ENCODE measurements at regions of chr6 and their contacts with region 1.

Region 1: GRCh38 chr6:2988426-2989331 is 11.0 kb upstream of the NQO2 start:
- DNase-seq: no peak
- ATAC-seq: peak; percentile 92
- H3K4me3 ChIP-seq: peak overlapping the region; percentile 71
- H3K27ac ChIP-seq: peak overlapping the region; percentile 79
- H3K4me1 ChIP-seq: peaks cover 13% of the 10 kb centered on the region
- H3K27me3 ChIP-seq: peaks cover 0 to 2% of the 10 kb centered on the region in 2 experiments; a peak in 3 of 4 replicates
- CTCF ChIP-seq: peak; percentile 56 to 75 (median 73)
- EP300 ChIP-seq: no peak; a peak in 1 of 4 replicates
- POLR2A ChIP-seq: peak; percentile 64
- RAD21 ChIP-seq: peak; percentile 73

Region 2: DNA sequence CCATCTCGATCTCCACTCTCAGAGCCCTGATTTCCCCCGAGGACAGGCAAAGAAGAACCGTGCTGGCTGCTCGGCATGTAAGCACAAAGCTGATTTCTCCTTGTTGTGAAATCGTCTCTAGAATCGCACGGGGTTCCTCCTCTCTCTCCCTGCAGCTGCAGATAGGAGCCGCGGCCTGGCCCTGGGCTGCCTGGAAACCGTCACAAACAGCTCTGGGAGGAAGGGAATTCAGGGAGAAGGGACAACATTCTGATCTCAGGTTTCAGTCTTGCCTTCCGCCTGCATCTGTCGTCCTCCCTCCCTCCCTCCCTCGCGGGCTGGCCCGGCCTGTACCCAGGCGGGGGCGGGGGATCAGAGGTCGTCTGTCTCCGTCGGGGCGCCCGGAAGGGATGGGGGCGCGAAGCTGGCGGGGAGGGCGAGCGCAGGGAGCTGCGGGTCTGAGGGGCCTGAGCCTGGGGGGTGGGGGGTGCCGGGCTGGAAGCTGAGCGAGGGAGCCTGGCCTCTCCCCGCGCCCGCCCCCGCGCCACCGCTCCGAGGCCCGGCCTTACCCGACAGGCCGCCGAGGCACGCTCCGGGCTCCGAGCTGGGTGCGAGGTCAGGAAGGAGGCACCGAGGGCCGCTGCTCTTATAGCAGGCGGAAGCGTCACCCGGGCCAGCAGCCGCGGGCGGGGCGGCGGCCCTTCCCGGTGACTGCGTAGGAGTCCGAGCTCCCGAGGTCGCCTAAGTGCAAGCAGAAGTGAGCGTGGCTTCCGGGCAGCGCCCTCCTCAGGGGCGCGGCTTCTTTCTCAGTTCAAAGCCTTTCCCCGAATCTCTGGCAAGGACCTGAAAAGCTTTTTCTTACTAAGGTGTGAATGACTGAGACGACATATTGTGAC is 147.2 kb before region 1 on chr6 and contains the start of gene SERPINB1:
- CTCF ChIA-PET with region 1: interaction called, 48 read pairs
- POLR2A ChIA-PET with region 1: interaction called, 6 read pairs
- RAD21 ChIA-PET with region 1: interaction called, 29 read pairs
- SMC1A ChIA-PET with region 1: interaction called, 56 read pairs
- in situ Hi-C with region 1: loop called (anchors 5 kb)
- intact Hi-C with region 1: loop called (anchors 1 kb)
- DNase-seq: no peak
- ATAC-seq: peak; percentile 76
- H3K4me3 ChIP-seq: no peak within 1 kb of the TSS; the same call in 1 of the 2 replicates
- H3K27ac ChIP-seq: no peak within 1 kb of the TSS
- H3K4me1 ChIP-seq: peaks cover 4% of the 10 kb centered on the region; the same call in 1 of the 2 replicates
- H3K27me3 ChIP-seq: peaks cover 0 to 5% of the 10 kb centered on the region in 2 experiments; a peak in 3 of 4 replicates
- CTCF ChIP-seq: 0 out of 6 replicates have a peak, but pooled peaks of 1 of the 3 experiments have one; percentile 0
- EP300 ChIP-seq: no peak
- POLR2A ChIP-seq: peak; percentile 51; the same call in 1 of the 2 replicates
- RAD21 ChIP-seq: no peak
- polyA plus RNA-seq, gene SERPINB1: 0.82 to 1.8 TPM

Region 3: GRCh38 chr6:2952557-2953095 is 36.1 kb before region 1 on chr6:
- CTCF ChIA-PET with region 1: interaction called, 55 read pairs
- POLR2A ChIA-PET with region 1: no interaction called
- RAD21 ChIA-PET with region 1: interaction called, 15 read pairs
- SMC1A ChIA-PET with region 1: interaction called, 10 read pairs
- in situ Hi-C with region 1: no loop called
- intact Hi-C with region 1: loop called (anchors 1 kb)
- DNase-seq: no peak
- ATAC-seq: peak; percentile 99
- H3K4me3 ChIP-seq: no peak overlapping the region
- H3K27ac ChIP-seq: no peak overlapping the region
- H3K4me1 ChIP-seq: no peaks in the 10 kb centered on the region
- H3K27me3 ChIP-seq: peaks cover 4 to 6% of the 10 kb centered on the region in 2 experiments
- CTCF ChIP-seq: peak; percentile 52 to 83 (median 80)
- EP300 ChIP-seq: no peak
- POLR2A ChIP-seq: no peak
- RAD21 ChIP-seq: no peak

Region 4: DNA sequence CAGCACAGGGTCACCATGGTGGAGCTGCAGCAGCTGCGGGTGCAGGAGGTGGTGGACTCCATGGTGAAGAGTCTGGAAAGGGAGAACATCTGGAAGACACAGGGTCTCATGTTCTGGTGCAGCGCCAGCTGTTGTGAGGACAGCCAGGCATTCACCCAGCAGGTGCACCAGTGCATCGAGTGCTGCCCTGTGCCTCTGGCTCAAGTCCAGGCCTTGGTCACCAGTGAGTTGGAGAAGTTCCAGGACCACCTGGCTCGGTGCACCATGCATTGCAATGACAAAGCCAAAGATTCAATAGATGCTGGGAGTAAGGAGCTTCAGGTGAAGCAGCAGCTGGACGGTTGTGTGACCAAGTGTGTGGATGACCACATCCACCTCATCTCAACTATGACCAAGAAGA is 56.7 kb after region 1 on chr6:
- CTCF ChIA-PET with region 1: no interaction called
- POLR2A ChIA-PET with region 1: no interaction called
- RAD21 ChIA-PET with region 1: no interaction called
- SMC1A ChIA-PET with region 1: no interaction called
- in situ Hi-C with region 1: no loop called
- intact Hi-C with region 1: no loop called
- DNase-seq: no peak
- ATAC-seq: no peak
- H3K4me3 ChIP-seq: no peak overlapping the region
- H3K27ac ChIP-seq: no peak overlapping the region
- H3K4me1 ChIP-seq: no peaks in the 10 kb centered on the region
- H3K27me3 ChIP-seq: peaks cover 0 to 6% of the 10 kb centered on the region in 2 experiments; a peak in 2 of 4 replicates
- CTCF ChIP-seq: no peak
- EP300 ChIP-seq: no peak
- POLR2A ChIP-seq: no peak
- RAD21 ChIP-seq: no peak

Region 5: DNA sequence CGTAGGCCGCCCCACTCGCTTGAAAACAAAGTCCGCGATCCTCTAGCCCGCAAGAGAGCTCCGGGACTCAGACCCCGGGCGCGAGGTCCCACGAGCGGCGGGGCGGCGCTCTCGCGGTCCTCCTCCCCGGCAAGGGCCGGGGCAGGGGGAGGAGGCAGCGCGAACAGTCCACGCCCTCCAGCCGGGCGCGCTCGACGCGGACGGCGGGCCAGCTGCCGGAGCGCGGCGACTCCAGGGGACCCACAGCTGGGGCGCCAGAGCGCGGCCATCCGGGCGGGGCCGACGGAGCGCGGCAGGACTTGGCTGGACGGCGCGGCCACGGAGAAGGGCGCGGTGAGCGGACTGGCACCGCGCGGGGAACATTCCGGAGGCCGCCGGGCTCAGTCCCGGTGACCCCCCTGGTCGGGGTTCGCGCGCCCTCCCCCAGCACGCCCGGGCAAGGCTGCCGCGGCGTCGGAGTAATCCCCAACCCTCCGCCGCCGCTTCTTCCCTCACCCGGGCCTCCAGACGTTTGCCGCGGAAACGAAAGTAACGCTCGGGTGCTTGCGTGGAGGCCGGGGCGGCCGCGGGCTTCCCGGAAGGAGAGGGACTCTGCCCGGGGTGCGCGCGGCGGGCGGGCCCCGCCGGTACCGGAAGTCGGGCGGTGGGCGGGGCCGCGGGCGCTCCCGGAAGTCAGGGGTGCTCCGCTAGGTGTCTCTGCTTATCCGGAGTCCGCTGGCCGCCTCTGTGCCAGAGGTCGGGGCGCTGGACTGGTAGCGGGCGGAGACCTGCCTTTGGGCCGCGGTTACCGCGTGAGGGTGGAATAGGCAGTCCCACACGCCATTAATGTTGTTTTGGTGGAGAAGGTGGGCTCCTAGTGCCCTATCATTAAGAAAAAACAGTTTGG is 79.9 kb after region 1 on chr6 and contains the start of gene RIPK1:
- CTCF ChIA-PET with region 1: interaction called, 11 read pairs
- POLR2A ChIA-PET with region 1: interaction called, 20 read pairs
- RAD21 ChIA-PET with region 1: interaction called, 7 read pairs
- SMC1A ChIA-PET with region 1: interaction called, 5 read pairs
- in situ Hi-C with region 1: no loop called
- intact Hi-C with region 1: no loop called
- DNase-seq: peak; percentile 40
- ATAC-seq: peak; percentile 90
- H3K4me3 ChIP-seq: peak within 1 kb of the TSS; percentile 73
- H3K27ac ChIP-seq: peak within 1 kb of the TSS; percentile 91
- H3K4me1 ChIP-seq: no peaks in the 10 kb centered on the region; the same call in 1 of the 2 replicates
- H3K27me3 ChIP-seq: no peaks in the 10 kb centered on the region
- CTCF ChIP-seq: peak; percentile 23 to 62 (median 35); a peak in 5 of 6 replicates
- EP300 ChIP-seq: no peak
- POLR2A ChIP-seq: peak; percentile 84
- RAD21 ChIP-seq: 0 out of 2 replicates have a peak, but pooled peaks have one; percentile 15
- polyA plus RNA-seq, gene RIPK1: 1.6 to 2.2 TPM